ENCODE measurements at regions of chr3 and their contacts with region 1.

Region 1: GRCh38 chr3:124887177-124887931 is at the start of gene ITGB5:
- DNase-seq: peak; percentile 61
- ATAC-seq: peak; percentile 81
- H3K4me3 ChIP-seq: peak within 1 kb of the TSS; percentile 82 to 85 (median 85)
- H3K27ac ChIP-seq: peak within 1 kb of the TSS; percentile 90
- H3K4me1 ChIP-seq: peaks cover 61% of the 10 kb centered on the region
- H3K27me3 ChIP-seq: no peaks in the 10 kb centered on the region
- CTCF ChIP-seq: no peak; the same call in 1 of the 2 replicates
- EP300 ChIP-seq: no peak
- POLR2A ChIP-seq: peak in 1 of 2 experiments; percentile 69; a peak in 2 of 4 replicates
- RAD21 ChIP-seq: peak; percentile 63
- total RNA-seq, gene ITGB5: 50.2 and 74.1 TPM in 2 replicates

Region 2: GRCh38 chr3:124812291-124813265 is 74.8 kb before region 1 on chr3:
- CTCF ChIA-PET with region 1: no interaction called
- POLR2A ChIA-PET with region 1: interaction called, 12 read pairs
- in situ Hi-C with region 1: no loop called
- intact Hi-C with region 1: no loop called
- DNase-seq: peak; percentile 74
- ATAC-seq: peak; percentile 72
- H3K4me3 ChIP-seq: no peak overlapping the region
- H3K27ac ChIP-seq: peak overlapping the region; percentile 72
- H3K4me1 ChIP-seq: peaks cover 62% of the 10 kb centered on the region
- H3K27me3 ChIP-seq: no peaks in the 10 kb centered on the region
- CTCF ChIP-seq: no peak
- EP300 ChIP-seq: peak in 1 of 2 experiments; percentile 60; a peak in 2 of 4 replicates
- POLR2A ChIP-seq: peak; percentile 36 to 55; a peak in 1 of 4 replicates
- RAD21 ChIP-seq: no peak

Region 3: DNA sequence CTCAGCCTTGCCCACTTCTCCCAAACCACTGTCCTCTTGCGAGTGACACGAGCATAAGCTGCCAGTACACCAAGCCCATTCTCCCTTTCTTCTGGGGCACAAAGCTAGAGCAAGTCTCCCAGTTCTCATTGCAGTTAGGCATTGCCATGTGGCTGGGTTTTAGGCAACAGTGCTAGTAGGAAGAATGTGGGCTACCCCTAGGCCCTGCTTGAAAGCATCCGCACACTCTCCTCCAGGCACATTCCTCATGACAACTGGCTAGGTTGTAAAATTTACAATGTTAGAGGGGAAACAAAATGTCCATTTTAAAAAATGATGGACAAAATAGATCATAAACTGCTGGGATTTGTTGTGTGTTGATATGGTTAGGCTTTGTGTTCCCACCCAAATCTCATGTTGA is 19.8 kb before region 1 on chr3:
- CTCF ChIA-PET with region 1: no interaction called
- POLR2A ChIA-PET with region 1: no interaction called
- in situ Hi-C with region 1: no loop called
- intact Hi-C with region 1: no loop called
- DNase-seq: no peak
- ATAC-seq: no peak
- H3K4me3 ChIP-seq: no peak overlapping the region
- H3K27ac ChIP-seq: no peak overlapping the region
- H3K4me1 ChIP-seq: no peaks in the 10 kb centered on the region
- H3K27me3 ChIP-seq: no peaks in the 10 kb centered on the region
- CTCF ChIP-seq: no peak
- EP300 ChIP-seq: no peak
- POLR2A ChIP-seq: no peak
- RAD21 ChIP-seq: no peak

Measured in HepG2 (cell line).